ENCODE measurements at regions of chr5 and their contacts with region 1.

Region 1: GRCh38 chr5:138464008-138464387 is 1.3 kb upstream of the EGR1 start:
- DNase-seq: peak; percentile 97
- ATAC-seq: peak; percentile 54
- H3K4me3 Mint-ChIP-seq: peak overlapping the region; percentile 77
- H3K27ac Mint-ChIP-seq: peak overlapping the region; percentile 94
- H3K4me1 Mint-ChIP-seq: peaks cover 58% of the 10 kb centered on the region
- H3K27me3 Mint-ChIP-seq: no peaks in the 10 kb centered on the region

Region 2: GRCh38 chr5:138178516-138179276 is 285.3 kb before region 1 on chr5 and contains the starts of genes BRD8 and KIF20A:
- CTCF ChIA-PET with region 1: interaction called, 3 read pairs
- POLR2A ChIA-PET with region 1: no interaction called
- intact Hi-C with region 1: loop called in 1 of 2 experiments (anchors 1 kb)
- DNase-seq: peak; percentile 96
- ATAC-seq: peak; percentile 93
- H3K4me3 Mint-ChIP-seq: no peak within 1 kb of the TSS
- H3K27ac Mint-ChIP-seq: peak within 1 kb of the TSS; percentile 73
- H3K4me1 Mint-ChIP-seq: peaks cover 16% of the 10 kb centered on the region
- H3K27me3 Mint-ChIP-seq: no peaks in the 10 kb centered on the region
- total RNA-seq, gene BRD8: 60.7 to 61.4 TPM
- total RNA-seq, gene KIF20A: 66.6 to 76.3 TPM

Region 3: DNA sequence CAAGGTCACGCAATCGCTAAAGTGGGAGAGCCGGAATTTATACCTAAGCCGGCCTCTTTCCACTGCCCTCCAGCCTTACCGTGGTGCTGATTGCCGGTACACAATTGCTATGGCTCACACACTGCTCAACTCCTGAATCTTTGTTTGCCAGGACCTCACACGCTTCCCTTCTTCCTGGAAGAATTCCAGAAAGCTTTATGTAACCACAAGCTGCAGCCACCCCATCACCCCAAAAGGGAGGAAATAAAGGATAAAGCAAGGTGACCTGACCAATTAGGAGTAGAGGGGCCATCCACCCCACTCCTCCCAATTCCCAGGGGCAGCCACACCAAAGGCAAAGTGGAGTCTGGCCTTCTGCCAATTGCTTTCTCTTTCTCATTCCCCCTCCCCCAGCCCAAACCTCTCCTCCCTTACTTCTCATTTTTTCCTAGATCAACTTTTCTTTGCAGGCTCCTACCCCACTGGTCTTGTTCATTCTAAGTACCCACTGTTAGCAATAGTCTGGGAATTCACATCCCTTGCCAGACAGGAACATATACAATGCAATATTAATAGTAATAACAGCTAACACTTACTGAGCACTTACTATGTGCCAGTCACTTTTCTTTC is 232.9 kb before region 1 on chr5:
- CTCF ChIA-PET with region 1: no interaction called
- POLR2A ChIA-PET with region 1: no interaction called
- intact Hi-C with region 1: no loop called
- DNase-seq: no peak
- ATAC-seq: no peak
- H3K4me3 Mint-ChIP-seq: no peak overlapping the region
- H3K27ac Mint-ChIP-seq: no peak overlapping the region
- H3K4me1 Mint-ChIP-seq: no peaks in the 10 kb centered on the region
- H3K27me3 Mint-ChIP-seq: peaks cover 6% of the 10 kb centered on the region

Region 4: GRCh38 chr5:138337685-138338410 is 126.2 kb before region 1 on chr5 and contains the start of gene FAM53C:
- CTCF ChIA-PET with region 1: interaction called, 3 read pairs
- POLR2A ChIA-PET with region 1: interaction called, 3 read pairs
- intact Hi-C with region 1: loop called in 1 of 2 experiments (anchors 1 kb)
- DNase-seq: peak; percentile 95
- ATAC-seq: peak; percentile 88
- H3K4me3 Mint-ChIP-seq: peak within 1 kb of the TSS; percentile 84
- H3K27ac Mint-ChIP-seq: peak within 1 kb of the TSS; percentile 97
- H3K4me1 Mint-ChIP-seq: peaks cover 38% of the 10 kb centered on the region
- H3K27me3 Mint-ChIP-seq: no peaks in the 10 kb centered on the region
- total RNA-seq, gene FAM53C: 22.8 to 25.9 TPM

Region 5: DNA sequence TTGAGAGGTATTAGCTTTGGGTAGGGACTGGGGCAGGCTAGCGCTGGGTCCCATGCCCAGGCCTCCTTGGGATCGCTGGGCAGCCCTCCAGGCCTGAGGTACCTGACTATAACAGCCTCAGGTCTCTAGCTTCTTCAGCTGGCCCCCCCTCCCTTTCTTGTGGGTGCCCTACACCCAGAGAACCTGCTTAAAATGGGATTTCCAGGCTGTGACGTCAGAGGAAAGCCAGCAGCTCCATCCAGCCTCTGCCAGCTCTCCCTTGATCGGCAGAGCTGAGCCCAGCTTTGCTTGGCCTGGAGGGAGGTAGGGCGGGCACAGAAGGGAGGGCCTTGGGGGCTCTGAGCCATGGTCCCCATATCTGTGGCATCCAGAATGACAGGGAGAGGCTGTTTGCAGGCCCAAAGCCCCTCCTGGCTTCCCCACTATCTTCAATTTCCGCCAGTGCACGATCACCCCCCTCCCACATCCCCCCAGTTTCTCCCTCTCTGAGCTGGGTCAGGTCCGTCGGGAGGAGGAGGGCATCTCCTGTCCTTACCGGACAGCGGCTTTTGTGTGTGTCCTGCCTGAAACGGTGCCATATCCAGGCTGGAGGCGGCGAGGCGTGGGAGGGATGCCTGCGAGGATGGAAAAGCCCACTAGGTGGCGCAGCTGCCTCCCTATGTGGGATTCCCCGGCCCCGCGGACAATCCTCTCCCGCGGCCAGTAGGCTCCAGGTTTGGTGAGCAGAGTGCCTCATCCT is 14.3 kb before region 1 on chr5:
- CTCF ChIA-PET with region 1: interaction called, 12 read pairs
- POLR2A ChIA-PET with region 1: interaction called, 6 read pairs
- intact Hi-C with region 1: loop called (anchors 1 kb)
- DNase-seq: peak; percentile 93
- ATAC-seq: peak; percentile 97
- H3K4me3 Mint-ChIP-seq: peak overlapping the region; percentile 23
- H3K27ac Mint-ChIP-seq: peak overlapping the region; percentile 47
- H3K4me1 Mint-ChIP-seq: peaks cover 5% of the 10 kb centered on the region
- H3K27me3 Mint-ChIP-seq: no peaks in the 10 kb centered on the region

Region 6: DNA sequence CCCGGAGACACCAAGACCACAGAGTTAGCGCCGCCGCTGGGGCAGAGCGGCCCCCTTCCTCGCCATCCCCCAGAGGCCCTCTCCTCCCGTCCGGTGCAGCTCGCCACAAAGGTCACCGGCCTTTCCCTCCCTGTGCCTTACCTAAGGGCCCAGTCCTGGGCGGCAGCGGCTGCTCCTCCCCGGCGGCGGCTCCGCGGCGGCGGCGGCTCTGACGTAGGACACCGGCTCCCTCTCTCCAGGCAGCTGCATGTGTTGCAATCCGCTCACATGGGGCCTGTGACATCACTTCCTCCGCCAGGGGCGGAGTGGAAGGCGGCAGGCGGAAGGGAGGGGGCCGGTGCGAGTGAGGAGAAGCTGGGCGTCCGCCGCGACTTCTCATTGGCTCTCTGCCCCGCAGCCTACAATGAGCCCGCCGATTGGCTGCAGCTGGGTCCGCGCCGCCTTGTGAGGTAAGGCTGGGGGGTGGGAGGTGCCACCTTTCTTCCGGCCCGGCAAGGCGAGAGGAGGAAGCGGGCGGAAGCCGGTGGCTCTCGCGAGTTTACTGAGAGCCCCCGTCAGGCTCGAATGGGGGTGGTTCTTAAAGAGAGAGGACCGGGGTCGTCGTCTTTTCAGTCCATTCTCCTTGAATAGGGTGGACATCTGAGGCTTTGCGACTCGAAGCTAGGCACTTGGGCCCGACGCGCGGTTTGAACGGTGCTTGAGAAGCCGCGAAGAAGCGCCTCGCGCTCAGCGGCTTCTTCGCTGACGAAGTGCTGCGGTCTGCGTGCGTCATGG is 79.1 kb after region 1 on chr5 and contains the start of gene ETF1:
- CTCF ChIA-PET with region 1: interaction called, 10 read pairs
- POLR2A ChIA-PET with region 1: interaction called, 22 read pairs
- intact Hi-C with region 1: loop called (anchors 1 kb)
- DNase-seq: peak; percentile 100
- ATAC-seq: peak; percentile 94
- H3K4me3 Mint-ChIP-seq: peak within 1 kb of the TSS; percentile 100
- H3K27ac Mint-ChIP-seq: peak within 1 kb of the TSS; percentile 100
- H3K4me1 Mint-ChIP-seq: peaks cover 67% of the 10 kb centered on the region
- H3K27me3 Mint-ChIP-seq: no peaks in the 10 kb centered on the region
- total RNA-seq, gene ETF1: 140 to 156 TPM

Region 7: GRCh38 chr5:138706655-138707480 is 242.9 kb after region 1 on chr5:
- CTCF ChIA-PET with region 1: no interaction called
- POLR2A ChIA-PET with region 1: no interaction called
- intact Hi-C with region 1: no loop called
- DNase-seq: no peak
- ATAC-seq: no peak
- H3K4me3 Mint-ChIP-seq: no peak overlapping the region
- H3K27ac Mint-ChIP-seq: no peak overlapping the region
- H3K4me1 Mint-ChIP-seq: no peaks in the 10 kb centered on the region
- H3K27me3 Mint-ChIP-seq: peaks cover 29% of the 10 kb centered on the region

Region 8: GRCh38 chr5:139293504-139294373 is 829.7 kb after region 1 on chr5 and contains the start of gene MATR3:
- CTCF ChIA-PET with region 1: no interaction called
- POLR2A ChIA-PET with region 1: no interaction called
- intact Hi-C with region 1: loop called in 1 of 2 experiments (anchors 1 kb)
- DNase-seq: peak; percentile 98
- ATAC-seq: peak; percentile 92
- H3K4me3 Mint-ChIP-seq: peak within 1 kb of the TSS; percentile 97
- H3K27ac Mint-ChIP-seq: peak within 1 kb of the TSS; percentile 99
- H3K4me1 Mint-ChIP-seq: peaks cover 37% of the 10 kb centered on the region
- H3K27me3 Mint-ChIP-seq: no peaks in the 10 kb centered on the region
- total RNA-seq, gene MATR3: 113 to 133 TPM

Measured in activated CD4-positive, alpha-beta T cell treated with anti-CD3 and anti-CD28 coated beads for 36 hours (primary cell).